Psoas muscle (tissue), 8 donors: ENCODE measurements at regions of chr14 and their contacts with region 1.

Region 1: DNA sequence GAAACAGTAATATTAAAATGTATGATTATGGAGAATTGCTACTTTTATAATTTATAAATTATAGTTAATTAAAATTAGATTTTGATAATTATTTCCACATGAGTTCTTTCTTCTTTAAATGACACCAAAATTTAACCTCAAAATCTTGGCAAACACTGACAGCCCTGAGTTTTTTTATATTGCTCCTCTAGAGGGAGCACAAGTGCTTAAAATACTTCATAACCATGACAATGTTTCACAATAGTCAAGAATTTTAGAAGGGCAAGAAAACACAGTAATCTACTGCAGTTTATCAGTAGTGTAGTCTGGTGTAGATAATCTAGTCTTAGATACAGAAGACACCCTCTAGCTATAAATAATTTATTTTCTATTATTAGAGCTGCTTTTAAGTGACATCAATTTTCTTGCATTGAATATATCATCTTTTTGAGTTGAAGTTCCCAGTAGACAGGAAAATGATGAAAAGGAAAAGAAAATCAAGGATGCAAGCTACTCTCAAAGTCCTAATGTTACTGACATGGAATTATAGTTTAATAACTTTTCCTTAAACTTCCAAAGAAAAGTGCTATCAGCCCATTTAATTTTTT is 14.3 kb upstream of the PTGER2 start:
- DNase-seq: no peak
- ATAC-seq: peak in 1 of 4 donors; percentile 63
- H3K4me3 ChIP-seq: no peak overlapping the region
- H3K27ac ChIP-seq: no peak overlapping the region
- H3K4me1 ChIP-seq: no peaks in the 10 kb centered on the region
- H3K27me3 ChIP-seq: peaks cover 0 to 2% (median 0%) of the 10 kb centered on the region in 3 donors
- CTCF ChIP-seq: peak; percentile 58

Region 2: DNA sequence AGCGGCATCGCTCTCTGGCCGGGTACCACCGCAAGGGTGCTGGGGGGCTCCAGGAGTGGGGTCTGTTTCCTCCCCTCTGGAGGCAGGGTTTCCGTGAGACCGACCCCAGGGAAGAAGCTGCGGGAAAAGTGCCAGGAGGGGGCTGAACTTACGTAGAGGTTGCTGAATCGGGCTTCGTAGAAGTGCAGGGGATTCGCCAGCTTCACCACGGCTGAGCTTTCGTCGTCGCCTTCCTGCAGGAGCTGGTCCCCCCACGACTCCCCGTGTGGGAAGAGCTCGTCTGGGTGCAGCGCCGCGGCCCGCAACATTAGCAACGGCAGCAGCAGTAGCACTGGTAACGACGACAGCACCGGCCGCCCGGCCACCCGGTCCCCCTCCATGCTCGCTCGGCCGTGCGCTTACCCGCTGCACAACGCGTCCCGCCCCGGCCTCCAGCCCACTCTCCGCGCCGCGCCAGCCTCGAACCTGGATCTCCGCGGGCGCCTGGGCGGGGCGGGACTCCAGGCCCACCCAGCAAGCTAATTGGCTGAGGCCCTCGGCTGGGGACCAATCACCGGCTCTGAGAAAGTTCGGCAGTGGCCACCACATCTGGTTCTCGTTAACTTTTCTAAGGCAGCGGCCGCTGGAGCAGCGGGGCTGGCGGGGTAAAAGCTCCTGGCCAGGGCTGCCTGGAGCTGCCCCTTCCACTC is 231.0 kb before region 1 on chr14 and contains the start of gene NID2:
- intact Hi-C with region 1: no loop called
- DNase-seq: peak; percentile 87 to 90
- ATAC-seq: peak; percentile 75 to 87 (median 84)
- H3K4me3 ChIP-seq: peak within 1 kb of the TSS; percentile 72
- H3K27ac ChIP-seq: peak within 1 kb of the TSS; percentile 28
- H3K4me1 ChIP-seq: peaks cover 7% of the 10 kb centered on the region
- H3K27me3 ChIP-seq: peaks cover 0 to 42% (median 15%) of the 10 kb centered on the region in 3 donors
- CTCF ChIP-seq: no peak
- total RNA-seq, gene NID2: 4.1 to 12.9 (median 8.8) TPM

Region 3: GRCh38 chr14:52253503-52253902 is 46.3 kb before region 1 on chr14:
- intact Hi-C with region 1: no loop called
- DNase-seq: no peak
- ATAC-seq: no peak
- H3K4me3 ChIP-seq: no peak overlapping the region
- H3K27ac ChIP-seq: no peak overlapping the region
- H3K4me1 ChIP-seq: no peaks in the 10 kb centered on the region
- H3K27me3 ChIP-seq: no peaks in the 10 kb centered on the region
- CTCF ChIP-seq: no peak

Region 4: DNA sequence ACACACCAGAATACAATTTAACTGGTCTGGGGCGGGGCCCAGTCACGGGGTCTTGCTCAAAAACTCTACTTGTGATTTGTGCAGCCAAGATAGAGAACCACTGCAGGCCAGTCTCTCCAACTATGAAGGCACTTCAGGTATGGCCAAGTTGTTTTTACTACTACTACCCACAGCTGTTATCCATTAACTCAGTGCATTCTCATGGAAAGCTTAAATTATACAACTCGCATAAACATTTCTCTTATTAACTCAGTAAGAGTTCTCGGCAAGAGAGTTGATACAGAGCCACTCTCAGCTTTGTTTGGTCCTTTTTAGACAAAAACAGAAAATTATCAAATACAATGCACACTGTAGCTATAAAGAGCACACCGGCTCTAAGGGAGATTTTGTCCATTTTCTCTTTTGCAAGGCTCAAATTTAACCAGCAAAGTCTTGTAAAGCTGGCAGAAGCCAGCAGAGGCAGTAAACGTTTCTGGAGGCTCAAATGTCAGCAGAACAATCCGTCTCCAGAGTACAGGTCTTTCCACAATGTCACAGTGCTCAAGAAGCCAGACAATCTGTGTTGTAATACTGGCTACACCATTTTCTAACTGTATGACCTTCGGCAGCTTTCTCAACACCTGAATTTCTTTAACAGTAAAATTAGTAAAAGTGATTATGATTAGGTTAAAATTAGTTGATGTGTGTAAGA is 100.3 kb after region 1 on chr14:
- intact Hi-C with region 1: no loop called
- DNase-seq: no peak
- ATAC-seq: no peak
- H3K4me3 ChIP-seq: no peak overlapping the region
- H3K27ac ChIP-seq: no peak overlapping the region
- H3K4me1 ChIP-seq: no peaks in the 10 kb centered on the region
- H3K27me3 ChIP-seq: no peaks in the 10 kb centered on the region
- CTCF ChIP-seq: no peak

Region 5: DNA sequence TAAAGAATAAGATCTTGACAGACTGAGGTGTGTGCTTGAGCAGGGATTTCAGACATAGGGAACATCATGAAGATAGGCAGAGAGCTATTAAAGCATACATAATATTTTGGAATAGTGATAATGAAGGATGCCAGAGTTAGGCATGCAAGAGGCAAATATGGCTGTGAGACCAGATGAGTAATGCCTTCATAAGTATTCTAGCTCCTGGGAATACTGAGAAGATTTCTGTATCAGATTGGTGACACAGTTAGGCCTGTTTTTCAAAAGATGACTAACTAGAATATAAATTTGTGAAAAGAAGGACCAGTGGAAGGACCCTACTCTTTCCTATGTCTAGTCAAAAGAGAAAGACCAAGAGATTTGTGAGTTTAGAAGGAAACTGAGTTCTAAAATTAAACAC is 143.7 kb after region 1 on chr14:
- intact Hi-C with region 1: no loop called
- DNase-seq: no peak
- ATAC-seq: no peak
- H3K4me3 ChIP-seq: no peak overlapping the region
- H3K27ac ChIP-seq: no peak overlapping the region
- H3K4me1 ChIP-seq: no peaks in the 10 kb centered on the region
- H3K27me3 ChIP-seq: no peaks in the 10 kb centered on the region
- CTCF ChIP-seq: no peak

Region 6: GRCh38 chr14:52473557-52473956 is 173.8 kb after region 1 on chr14:
- intact Hi-C with region 1: loop called (anchors 5 to 10 kb)
- DNase-seq: no peak
- ATAC-seq: no peak
- H3K4me3 ChIP-seq: no peak overlapping the region
- H3K27ac ChIP-seq: no peak overlapping the region
- H3K4me1 ChIP-seq: no peaks in the 10 kb centered on the region
- H3K27me3 ChIP-seq: no peaks in the 10 kb centered on the region
- CTCF ChIP-seq: peak; percentile 26